ENCODE measurements at regions of chr12 and their contacts with region 1.

Region 1: DNA sequence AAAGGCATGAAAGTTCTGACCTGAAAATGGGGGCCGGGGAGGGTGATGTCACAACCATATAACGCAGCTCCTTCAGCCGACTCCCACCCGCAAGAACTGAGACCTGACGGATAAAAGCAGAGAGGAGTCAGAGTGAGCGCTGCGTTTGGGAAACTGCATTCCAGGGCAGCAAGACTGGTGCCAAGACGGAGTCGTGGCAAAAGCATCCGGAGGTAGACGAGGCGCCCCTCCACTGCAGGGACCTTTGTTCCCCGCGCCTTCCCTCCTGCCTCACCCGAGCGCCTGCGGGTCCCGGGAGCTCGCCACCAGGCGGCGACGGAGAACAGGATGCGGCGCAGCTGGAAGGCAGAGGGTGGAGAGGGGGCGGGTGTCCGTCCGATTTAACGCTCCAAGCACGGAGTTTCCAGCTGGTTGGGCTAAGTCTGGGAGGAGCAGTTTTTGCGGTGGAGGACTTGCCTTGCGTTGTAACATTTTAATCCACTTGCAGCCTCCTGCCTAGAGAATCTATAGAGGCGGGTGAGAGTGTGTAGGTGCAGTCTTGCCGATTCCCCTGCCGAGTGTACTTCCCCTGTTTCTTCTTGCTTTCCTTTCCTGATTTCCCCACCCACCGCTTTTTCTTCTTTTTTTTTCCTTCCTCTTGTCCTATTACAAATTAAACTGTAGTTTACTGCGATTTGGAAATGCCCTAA is 1.2 kb upstream of the CPNE8 start:
- DNase-seq: peak; percentile 93
- H3K4me3 ChIP-seq: peak overlapping the region; percentile 56 to 73 (median 70)
- H3K27ac ChIP-seq: peak overlapping the region; percentile 91 to 92 (median 91)
- H3K4me1 ChIP-seq: peaks cover 0 to 15% (median 7%) of the 10 kb centered on the region in 4 donors
- H3K27me3 ChIP-seq: no peaks in the 10 kb centered on the region
- CTCF ChIP-seq: peak; percentile 64 to 91 (median 85)
- EP300 ChIP-seq: no peak
- POLR2A ChIP-seq: no peak

Region 2: GRCh38 chr12:38316391-38317129 is 590.1 kb before region 1 on chr12 and contains the start of gene ALG10B:
- intact Hi-C with region 1: loop called (anchors 5 kb)
- DNase-seq: peak; percentile 97
- H3K4me3 ChIP-seq: peak within 1 kb of the TSS; percentile 53 to 87 (median 70)
- H3K27ac ChIP-seq: peak within 1 kb of the TSS; percentile 81 to 90 (median 88)
- H3K4me1 ChIP-seq: peaks cover 0 to 10% (median 2%) of the 10 kb centered on the region in 4 donors
- H3K27me3 ChIP-seq: no peaks in the 10 kb centered on the region
- CTCF ChIP-seq: peak in 3 of 4 experiments; percentile 23 to 72 (median 50)
- EP300 ChIP-seq: no peak
- POLR2A ChIP-seq: no peak
- total RNA-seq, gene ALG10B: 3.1 to 3.6 (median 3.4) TPM

Region 3: DNA sequence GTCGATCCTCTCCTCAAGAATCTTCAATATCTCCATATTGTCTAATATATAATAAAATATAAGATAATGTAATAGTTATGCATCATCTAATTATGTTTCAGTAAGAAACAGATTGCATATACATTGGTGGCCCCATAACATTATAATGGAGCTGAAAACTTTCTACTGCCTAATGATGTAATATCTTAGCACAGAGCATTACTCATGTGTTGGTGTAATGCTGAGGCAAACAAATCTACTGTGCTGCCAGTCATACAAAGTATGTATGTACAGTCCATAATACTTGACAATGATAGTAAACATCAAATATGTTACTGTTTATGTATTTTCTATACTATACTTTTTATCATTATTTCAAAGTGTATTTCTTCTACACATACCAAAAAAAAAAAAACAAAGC is 130.0 kb before region 1 on chr12:
- intact Hi-C with region 1: no loop called
- DNase-seq: no peak
- H3K4me3 ChIP-seq: no peak overlapping the region
- H3K27ac ChIP-seq: no peak overlapping the region
- H3K4me1 ChIP-seq: no peaks in the 10 kb centered on the region
- H3K27me3 ChIP-seq: no peaks in the 10 kb centered on the region
- CTCF ChIP-seq: no peak
- EP300 ChIP-seq: no peak
- POLR2A ChIP-seq: no peak

Region 4: DNA sequence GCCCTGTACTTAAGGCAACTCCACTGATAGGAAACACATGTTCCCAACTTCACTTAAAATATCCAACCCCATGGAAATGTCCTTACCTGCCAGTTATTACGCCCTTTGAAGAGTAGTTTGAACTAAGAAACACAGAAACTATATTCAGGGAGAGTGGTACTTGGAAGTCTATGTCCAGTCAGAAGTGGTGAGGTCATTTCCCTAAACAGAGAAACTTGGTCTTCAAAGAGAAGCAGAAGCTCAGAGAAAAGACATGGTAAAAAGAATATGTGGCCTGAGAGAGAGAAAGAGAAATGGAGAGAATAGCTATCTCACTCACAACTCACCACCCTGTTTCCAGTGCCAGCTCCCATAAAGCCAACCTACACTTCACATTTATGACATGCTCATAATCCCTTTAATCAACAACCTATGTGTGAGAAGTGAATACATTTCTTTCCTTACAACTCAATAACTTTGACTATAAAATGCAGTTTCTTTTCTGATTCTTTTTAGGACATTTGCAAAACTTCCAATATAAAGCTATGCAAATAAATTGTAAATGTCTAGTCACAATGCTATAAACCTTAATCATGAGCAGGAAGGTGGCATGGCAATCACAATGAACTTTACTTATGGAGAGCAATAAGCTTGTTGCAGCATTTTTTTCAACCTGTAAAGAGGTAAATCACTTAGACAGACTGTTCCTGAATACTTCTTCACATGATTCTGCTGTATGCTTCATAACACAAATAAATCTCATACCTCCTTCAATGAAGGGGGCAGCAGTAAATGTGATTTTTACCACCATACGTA is 68.4 kb before region 1 on chr12:
- intact Hi-C with region 1: no loop called
- DNase-seq: no peak
- H3K4me3 ChIP-seq: no peak overlapping the region
- H3K27ac ChIP-seq: no peak overlapping the region
- H3K4me1 ChIP-seq: peaks cover 0 to 10% (median 3%) of the 10 kb centered on the region in 4 donors
- H3K27me3 ChIP-seq: no peaks in the 10 kb centered on the region
- CTCF ChIP-seq: no peak
- EP300 ChIP-seq: no peak
- POLR2A ChIP-seq: no peak

Region 5: DNA sequence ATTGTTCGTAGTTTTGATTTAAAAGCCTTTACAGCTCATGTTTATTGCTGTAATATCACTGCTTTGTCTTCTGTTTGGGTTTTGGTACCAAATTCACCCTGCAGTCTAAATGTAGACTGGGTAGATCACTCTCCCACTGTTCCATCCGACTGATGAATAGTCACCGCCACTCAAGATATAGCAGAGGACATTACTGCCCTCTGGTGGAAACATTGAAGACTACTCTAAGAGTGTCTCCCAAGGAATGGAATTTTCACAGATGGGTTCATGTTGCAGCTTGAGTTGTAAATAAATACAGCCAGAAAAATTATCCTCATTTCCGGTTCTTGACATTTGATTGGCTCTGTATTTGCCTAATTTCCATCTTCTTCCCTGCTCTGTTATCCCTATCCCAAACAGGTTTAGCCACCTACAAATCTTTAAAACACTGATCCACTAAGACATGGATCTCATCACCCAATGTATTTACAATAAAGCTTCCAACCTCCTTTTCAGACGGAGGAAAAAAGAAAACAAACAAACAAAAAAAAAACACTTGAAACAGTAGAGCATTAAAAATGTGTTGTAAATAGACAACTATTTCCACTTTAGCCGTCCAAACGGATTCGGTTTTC is 197.0 kb after region 1 on chr12:
- intact Hi-C with region 1: loop called (anchors 5 kb)
- DNase-seq: no peak
- H3K4me3 ChIP-seq: no peak overlapping the region
- H3K27ac ChIP-seq: no peak overlapping the region
- H3K4me1 ChIP-seq: no peaks in the 10 kb centered on the region
- H3K27me3 ChIP-seq: no peaks in the 10 kb centered on the region
- CTCF ChIP-seq: peak; percentile 43 to 79 (median 50)
- EP300 ChIP-seq: no peak
- POLR2A ChIP-seq: no peak

Measured in sigmoid colon (tissue), 7 donors.